WTC11 (cell line): ENCODE measurements at regions of chr6 and their contacts with region 1.

Region 1: GRCh38 chr6:139219271-139219729 is 72.5 kb downstream of the TXLNB start:
- DNase-seq: peak; percentile 77
- ATAC-seq: peak; percentile 100
- H3K4me3 Mint-ChIP-seq: peak overlapping the region; percentile 27; the same call in 1 of the 2 replicates
- H3K27ac Mint-ChIP-seq: peak overlapping the region; percentile 97
- H3K4me1 Mint-ChIP-seq: peaks cover 5% of the 10 kb centered on the region
- H3K27me3 Mint-ChIP-seq: no peaks in the 10 kb centered on the region
- CTCF ChIP-seq: peak; percentile 29; the same call in 1 of the 2 replicates

Region 2: DNA sequence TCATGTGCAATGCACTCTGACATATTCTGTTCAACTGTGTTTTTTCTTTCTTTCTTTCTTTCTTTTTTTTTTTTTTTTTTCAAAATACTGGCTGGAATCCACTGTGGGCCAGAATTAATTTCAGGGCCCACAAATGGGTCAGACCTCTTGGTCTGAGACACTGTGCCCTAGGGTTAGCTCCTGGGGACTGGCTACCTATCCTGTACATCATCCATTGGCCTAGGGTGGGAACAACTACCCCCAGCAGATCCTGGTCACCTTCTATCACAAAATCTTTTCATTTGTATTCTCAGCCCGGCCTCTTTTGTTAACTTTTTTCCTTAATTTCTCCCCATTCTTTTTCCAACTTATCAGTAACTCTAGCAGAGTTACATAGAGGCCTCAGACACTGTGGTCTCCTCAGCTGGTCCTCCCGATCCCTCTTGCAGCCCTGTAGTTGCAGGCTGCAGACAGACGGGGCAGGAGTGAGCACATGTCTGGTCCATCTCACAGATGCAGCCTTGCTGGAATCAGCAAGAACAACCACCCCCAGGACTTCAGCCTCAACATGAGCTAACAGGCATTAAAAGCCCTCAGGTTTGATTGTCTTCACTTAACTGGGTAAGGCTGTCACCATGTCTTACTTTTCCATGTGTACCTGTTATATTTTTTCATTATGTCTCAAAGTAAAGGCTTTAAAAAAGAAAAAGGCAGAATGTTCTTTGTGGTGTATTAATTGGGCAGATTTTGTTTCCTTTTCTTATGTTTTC is 31.2 kb after region 1 on chr6:
- CTCF ChIA-PET with region 1: interaction called, 14 read pairs
- POLR2A ChIA-PET with region 1: no interaction called
- DNase-seq: peak; percentile 79
- ATAC-seq: peak; percentile 100
- H3K4me3 Mint-ChIP-seq: no peak overlapping the region
- H3K27ac Mint-ChIP-seq: no peak overlapping the region
- H3K4me1 Mint-ChIP-seq: no peaks in the 10 kb centered on the region
- H3K27me3 Mint-ChIP-seq: no peaks in the 10 kb centered on the region
- CTCF ChIP-seq: peak; percentile 57

Region 3: GRCh38 chr6:139313784-139314545 is 94.7 kb after region 1 on chr6:
- CTCF ChIA-PET with region 1: interaction called, 11 read pairs
- POLR2A ChIA-PET with region 1: no interaction called
- DNase-seq: peak; percentile 50
- ATAC-seq: peak; percentile 90
- H3K4me3 Mint-ChIP-seq: no peak overlapping the region
- H3K27ac Mint-ChIP-seq: peak overlapping the region; percentile 99
- H3K4me1 Mint-ChIP-seq: peaks cover 65% of the 10 kb centered on the region
- H3K27me3 Mint-ChIP-seq: no peaks in the 10 kb centered on the region
- CTCF ChIP-seq: no peak

Region 4: DNA sequence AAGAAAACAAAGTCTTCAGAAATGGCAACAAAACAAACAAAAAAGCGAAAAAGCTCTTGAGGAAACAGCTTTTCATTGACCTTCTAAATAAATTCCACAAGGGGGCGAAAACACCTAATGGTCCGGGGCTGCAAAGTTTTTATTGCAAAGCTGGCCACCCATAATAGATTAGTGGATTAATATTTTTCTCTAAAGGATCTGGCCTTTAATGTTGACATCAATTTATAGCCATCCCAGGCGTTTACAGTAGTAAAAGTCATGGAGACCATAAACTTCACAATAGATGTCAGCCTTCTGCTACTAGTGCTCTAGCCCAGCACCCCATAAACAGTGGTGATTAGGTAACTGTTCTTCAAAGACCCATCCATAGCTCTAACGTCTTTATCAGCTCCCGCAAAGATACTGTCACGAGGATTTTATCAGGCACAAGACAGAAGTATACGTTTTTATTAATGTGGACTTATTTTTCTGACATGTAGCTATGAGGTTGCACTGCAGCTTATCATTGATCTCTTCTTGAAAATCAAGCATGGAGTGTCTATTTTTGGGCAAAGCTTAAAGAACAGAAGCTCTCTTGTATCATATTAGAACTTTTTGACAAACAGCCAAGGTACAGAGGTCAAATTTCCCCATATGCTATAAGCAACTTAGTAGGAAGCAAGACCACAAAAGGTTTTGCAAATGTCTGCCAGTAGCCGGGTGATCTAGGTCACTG is 150.4 kb after region 1 on chr6:
- CTCF ChIA-PET with region 1: interaction called, 94 read pairs
- POLR2A ChIA-PET with region 1: interaction called, 7 read pairs
- DNase-seq: no peak
- ATAC-seq: no peak
- H3K4me3 Mint-ChIP-seq: peak overlapping the region; percentile 36; the same call in 1 of the 2 replicates
- H3K27ac Mint-ChIP-seq: peak overlapping the region; percentile 81
- H3K4me1 Mint-ChIP-seq: peaks cover 71% of the 10 kb centered on the region
- H3K27me3 Mint-ChIP-seq: no peaks in the 10 kb centered on the region
- CTCF ChIP-seq: peak; percentile 34; the same call in 1 of the 2 replicates